Activated CD4-positive, alpha-beta T cell treated with anti-CD3 and anti-CD28 coated beads, Interleukin-2, amount 10 ng/mL, durations not matched to agents 24 days and 14 days (primary cell): ENCODE measurements at regions of chr3 and their contacts with region 1.

Region 1: GRCh38 chr3:125055913-125056745 is at the start of gene HEG1:
- DNase-seq: peak; percentile 94
- H3K4me3 Mint-ChIP-seq: peak within 1 kb of the TSS; percentile 89
- H3K27ac Mint-ChIP-seq: peak within 1 kb of the TSS; percentile 86
- H3K4me1 Mint-ChIP-seq: peaks cover 48% of the 10 kb centered on the region
- H3K27me3 Mint-ChIP-seq: peaks cover 25% of the 10 kb centered on the region
- total RNA-seq, gene HEG1: 35.3 and 40.8 TPM in 2 replicates

Region 2: GRCh38 chr3:125125821-125126245 is 69.7 kb after region 1 on chr3:
- intact Hi-C with region 1: loop called (anchors 2 kb)
- DNase-seq: peak; percentile 78
- H3K4me3 Mint-ChIP-seq: peak overlapping the region; percentile 9
- H3K27ac Mint-ChIP-seq: peak overlapping the region; percentile 68
- H3K4me1 Mint-ChIP-seq: peaks cover 59% of the 10 kb centered on the region
- H3K27me3 Mint-ChIP-seq: peaks cover 10% of the 10 kb centered on the region

Region 3: GRCh38 chr3:125202197-125202596 is 146.1 kb after region 1 on chr3:
- intact Hi-C with region 1: loop called (anchors 5 kb)
- DNase-seq: peak; percentile 67
- H3K4me3 Mint-ChIP-seq: no peak overlapping the region
- H3K27ac Mint-ChIP-seq: no peak overlapping the region
- H3K4me1 Mint-ChIP-seq: no peaks in the 10 kb centered on the region
- H3K27me3 Mint-ChIP-seq: peaks cover 37% of the 10 kb centered on the region

Region 4: GRCh38 chr3:125374996-125375941 is 319.1 kb after region 1 on chr3 and contains the start of gene ZNF148:
- intact Hi-C with region 1: loop called (anchors 10 kb)
- DNase-seq: peak; percentile 98
- H3K4me3 Mint-ChIP-seq: peak within 1 kb of the TSS; percentile 98
- H3K27ac Mint-ChIP-seq: peak within 1 kb of the TSS; percentile 98
- H3K4me1 Mint-ChIP-seq: peaks cover 32% of the 10 kb centered on the region
- H3K27me3 Mint-ChIP-seq: no peaks in the 10 kb centered on the region
- total RNA-seq, gene ZNF148: 31.8 and 38.0 TPM in 2 replicates

Region 5: DNA sequence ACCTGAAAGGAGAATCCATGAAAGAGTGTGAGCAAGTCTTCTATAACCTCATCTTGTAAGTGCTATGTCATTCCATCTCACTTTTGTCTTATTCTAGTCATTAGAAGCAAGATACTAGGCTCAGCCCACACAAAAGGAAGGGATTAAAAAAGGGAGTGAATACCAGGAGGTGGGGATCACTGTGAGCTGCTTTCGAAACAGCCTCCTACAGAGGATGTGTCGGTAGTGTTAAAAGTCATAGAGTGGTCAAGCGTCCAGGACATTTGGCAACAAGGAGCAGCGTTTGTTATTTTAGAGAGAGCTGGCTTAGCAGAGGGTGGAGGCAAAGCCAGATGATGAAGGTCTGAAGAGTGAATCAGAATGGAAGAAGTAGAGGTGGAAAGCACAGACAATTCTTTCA is 330.7 kb after region 1 on chr3:
- intact Hi-C with region 1: no loop called
- DNase-seq: no peak
- H3K4me3 Mint-ChIP-seq: no peak overlapping the region
- H3K27ac Mint-ChIP-seq: no peak overlapping the region
- H3K4me1 Mint-ChIP-seq: peaks cover 18% of the 10 kb centered on the region
- H3K27me3 Mint-ChIP-seq: peaks cover 21% of the 10 kb centered on the region